ENCODE measurements at regions of chr18 and their contacts with region 1.

Region 1: DNA sequence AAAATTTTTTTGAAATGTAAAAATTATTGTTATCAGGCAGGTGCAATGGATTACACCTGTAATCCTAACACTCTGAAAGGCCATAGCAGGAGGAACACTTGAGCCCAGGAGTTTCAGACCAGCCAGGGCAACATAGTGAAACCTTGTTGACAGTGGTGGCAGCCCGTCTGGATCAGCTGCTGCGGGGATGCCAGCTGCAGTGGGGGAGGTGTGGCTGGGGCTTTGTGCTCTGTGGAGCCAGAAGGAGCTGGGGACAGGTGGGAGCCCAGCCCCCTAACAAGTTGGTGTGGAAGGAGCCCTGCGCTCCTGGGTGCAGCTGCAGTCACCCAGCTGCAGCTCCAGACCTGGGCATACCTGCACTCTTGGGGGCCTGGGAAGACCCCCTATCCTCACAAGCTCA is 182.4 kb upstream of the MC4R start:
- DNase-seq: no peak
- H3K4me3 ChIP-seq: no peak overlapping the region
- H3K27ac ChIP-seq: no peak overlapping the region
- H3K4me1 ChIP-seq: no peaks in the 10 kb centered on the region
- H3K27me3 ChIP-seq: no peaks in the 10 kb centered on the region
- CTCF ChIP-seq: no peak
- POLR2A ChIP-seq: no peak

Region 2: GRCh38 chr18:59988098-59988706 is 566.8 kb before region 1 on chr18:
- intact Hi-C with region 1: loop called (anchors 5 to 10 kb)
- DNase-seq: peak; percentile 23 to 65 (median 42)
- H3K4me3 ChIP-seq: no peak overlapping the region
- H3K27ac ChIP-seq: no peak overlapping the region
- H3K4me1 ChIP-seq: no peaks in the 10 kb centered on the region
- H3K27me3 ChIP-seq: no peaks in the 10 kb centered on the region
- CTCF ChIP-seq: peak; percentile 80 to 97 (median 85)
- POLR2A ChIP-seq: no peak

Region 3: DNA sequence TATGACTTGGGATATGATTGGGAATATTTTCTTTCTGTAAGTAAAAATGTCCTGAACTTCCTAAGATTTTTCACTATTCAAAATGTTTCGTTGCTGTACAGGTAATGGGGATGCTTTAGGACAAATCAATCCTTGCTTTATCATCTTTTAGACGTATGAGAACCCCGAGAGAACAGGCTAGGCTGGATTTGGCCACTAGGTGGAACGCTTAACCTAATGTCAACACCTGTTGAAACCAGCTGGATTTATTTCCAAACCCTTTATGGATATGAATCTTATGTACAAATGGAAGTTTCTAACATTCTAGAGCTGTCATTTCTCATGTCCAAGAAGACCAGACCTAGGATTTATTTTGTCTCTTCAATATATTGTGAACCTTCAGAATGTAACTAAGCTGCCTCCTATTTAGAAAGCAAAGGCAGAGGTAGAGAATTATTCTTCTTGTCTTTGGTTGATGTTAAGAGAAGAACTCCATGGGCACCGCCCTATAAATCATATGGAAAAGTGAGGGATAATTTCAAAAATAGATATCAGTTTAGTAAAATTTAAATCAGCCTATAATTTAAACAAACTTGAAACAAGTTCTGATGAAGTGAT is 558.5 kb before region 1 on chr18:
- intact Hi-C with region 1: loop called in 1 of 2 experiments (anchors 10 kb)
- DNase-seq: peak in 4 of 7 donors; percentile 19 to 62 (median 26)
- H3K4me3 ChIP-seq: no peak overlapping the region
- H3K27ac ChIP-seq: no peak overlapping the region
- H3K4me1 ChIP-seq: no peaks in the 10 kb centered on the region
- H3K27me3 ChIP-seq: peaks cover 3% of the 10 kb centered on the region
- CTCF ChIP-seq: peak; percentile 21 to 51 (median 28)
- POLR2A ChIP-seq: no peak

Region 4: GRCh38 chr18:60044290-60045006 is 510.5 kb before region 1 on chr18:
- intact Hi-C with region 1: no loop called
- DNase-seq: no peak
- H3K4me3 ChIP-seq: no peak overlapping the region
- H3K27ac ChIP-seq: no peak overlapping the region
- H3K4me1 ChIP-seq: no peaks in the 10 kb centered on the region
- H3K27me3 ChIP-seq: no peaks in the 10 kb centered on the region
- CTCF ChIP-seq: no peak
- POLR2A ChIP-seq: no peak